ENCODE measurements at regions of chr5 and their contacts with region 1.

Region 1: DNA sequence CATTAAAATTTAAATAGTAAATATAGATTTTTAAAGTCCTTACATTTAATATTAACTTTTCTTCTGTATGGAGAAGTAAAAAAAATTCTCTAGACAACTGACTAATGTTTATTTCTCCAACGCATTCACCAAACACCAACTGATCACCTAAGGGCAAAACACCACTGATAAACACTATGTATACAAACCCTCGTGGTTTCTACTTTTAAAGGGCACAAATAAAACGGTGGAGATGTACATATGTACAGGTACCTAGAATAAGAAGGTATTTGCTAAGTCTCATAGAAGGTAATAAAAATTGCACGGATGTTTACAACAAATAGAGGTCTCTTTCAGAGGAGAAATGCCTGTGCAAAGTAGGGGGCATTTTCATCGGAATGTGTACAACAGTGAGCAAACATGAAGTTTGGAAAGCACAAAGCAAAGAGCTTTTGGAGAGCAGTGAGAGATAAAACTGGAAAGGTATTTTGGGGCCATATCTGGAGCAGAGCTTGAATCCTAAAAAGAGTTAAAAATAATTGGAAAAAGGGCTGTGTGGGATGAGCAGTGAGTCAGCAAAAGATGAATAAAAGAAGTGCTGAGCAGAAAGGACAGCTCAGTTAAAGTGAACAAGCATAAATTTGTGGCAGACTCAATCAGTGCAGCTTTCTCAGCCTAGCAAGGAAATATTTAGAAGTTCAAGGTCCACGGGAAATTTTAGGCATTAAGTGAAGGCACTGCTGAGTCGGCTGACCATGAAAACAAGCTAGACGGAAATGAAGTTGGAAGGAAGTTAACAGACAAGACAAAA is 160.0 kb downstream of the TMEM161B start:
- DNase-seq: no peak
- ATAC-seq: no peak
- H3K4me3 ChIP-seq: no peak overlapping the region
- H3K27ac ChIP-seq: no peak overlapping the region
- H3K4me1 ChIP-seq: no peaks in the 10 kb centered on the region
- H3K27me3 ChIP-seq: no peaks in the 10 kb centered on the region
- CTCF ChIP-seq: no peak

Region 2: GRCh38 chr5:87924451-87925126 is 184.1 kb before region 1 on chr5:
- CTCF ChIA-PET with region 1: no interaction called
- POLR2A ChIA-PET with region 1: no interaction called
- in situ Hi-C with region 1: no loop called
- intact Hi-C with region 1: no loop called
- DNase-seq: no peak
- ATAC-seq: no peak
- H3K4me3 ChIP-seq: no peak overlapping the region
- H3K27ac ChIP-seq: no peak overlapping the region
- H3K4me1 ChIP-seq: no peaks in the 10 kb centered on the region
- H3K27me3 ChIP-seq: no peaks in the 10 kb centered on the region
- CTCF ChIP-seq: no peak

Region 3: GRCh38 chr5:88889189-88890069 is 780.7 kb after region 1 on chr5:
- CTCF ChIA-PET with region 1: no interaction called
- POLR2A ChIA-PET with region 1: interaction called, 10 read pairs
- in situ Hi-C with region 1: no loop called
- intact Hi-C with region 1: no loop called
- DNase-seq: no peak
- ATAC-seq: peak; percentile 89
- H3K4me3 ChIP-seq: peak overlapping the region; percentile 53 to 71
- H3K27ac ChIP-seq: peak overlapping the region; percentile 25
- H3K4me1 ChIP-seq: peaks cover 30% of the 10 kb centered on the region
- H3K27me3 ChIP-seq: no peaks in the 10 kb centered on the region
- CTCF ChIP-seq: no peak

Measured in Panc1 (cell line).